Left lung (tissue), 14 donors: ENCODE measurements at regions of chrX and their contacts with region 1.

Region 1: DNA sequence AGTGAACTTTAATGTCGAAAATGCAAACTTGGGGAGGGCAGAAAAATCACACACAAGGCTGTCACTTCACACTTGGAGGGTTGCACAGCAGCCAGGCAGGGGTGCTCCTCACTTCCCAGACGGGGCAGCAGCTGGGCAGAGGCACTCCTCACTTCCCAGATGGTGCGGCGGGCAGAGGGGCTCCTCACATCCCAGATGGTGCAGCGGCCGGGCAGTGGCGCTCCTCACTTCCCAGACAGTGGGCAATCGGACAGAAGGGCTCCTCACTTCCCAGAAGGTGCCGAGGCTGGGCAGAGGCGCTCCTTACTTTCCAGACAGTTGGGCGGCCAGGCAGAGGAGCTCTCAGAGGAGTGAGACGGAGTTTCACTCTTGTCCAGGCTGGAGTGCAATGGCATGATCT is 90.6 kb downstream of the HMGB3 start:
- DNase-seq: peak in 1 of 4 donors; percentile 39
- ATAC-seq: no peak
- H3K4me3 ChIP-seq: no peak overlapping the region
- H3K27ac ChIP-seq: no peak overlapping the region
- H3K4me1 ChIP-seq: no peaks in the 10 kb centered on the region
- H3K27me3 ChIP-seq: no peaks in the 10 kb centered on the region
- CTCF ChIP-seq: no peak

Region 2: GRCh38 chrX:150772150-150772970 is 301.4 kb before region 1 on chrX:
- intact Hi-C with region 1: loop called in 1 of 2 experiments (anchors 10 kb)
- DNase-seq: peak; percentile 29 to 91 (median 67)
- ATAC-seq: peak; percentile 89
- H3K4me3 ChIP-seq: no peak overlapping the region
- H3K27ac ChIP-seq: no peak overlapping the region
- H3K4me1 ChIP-seq: peaks cover 0 to 4% of the 10 kb centered on the region in 2 donors
- H3K27me3 ChIP-seq: no peaks in the 10 kb centered on the region
- CTCF ChIP-seq: peak; percentile 64 to 78

Region 3: DNA sequence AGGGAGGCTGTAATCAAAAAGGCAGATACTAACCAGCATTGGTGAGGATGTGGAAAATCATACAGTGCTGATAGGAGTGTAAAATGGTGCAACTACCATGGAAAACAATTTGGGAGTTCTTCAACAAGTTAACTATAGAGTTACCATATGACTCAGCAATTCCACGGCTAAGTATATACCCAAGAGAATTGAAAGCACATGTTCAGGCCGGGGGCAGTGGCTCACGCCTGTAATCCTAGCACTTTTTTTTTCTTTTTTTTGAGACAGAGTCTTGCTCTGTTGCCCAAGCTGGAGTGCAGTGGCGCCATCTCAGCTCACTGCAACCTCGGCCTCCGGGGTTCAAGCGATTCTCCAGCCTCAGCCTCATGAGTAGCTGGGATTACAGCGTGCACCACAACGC is 160.3 kb before region 1 on chrX:
- intact Hi-C with region 1: no loop called
- DNase-seq: no peak
- ATAC-seq: no peak
- H3K4me3 ChIP-seq: no peak overlapping the region
- H3K27ac ChIP-seq: no peak overlapping the region
- H3K4me1 ChIP-seq: no peaks in the 10 kb centered on the region
- H3K27me3 ChIP-seq: no peaks in the 10 kb centered on the region
- CTCF ChIP-seq: no peak